ENCODE measurements at regions of chr7 and their contacts with region 1.

Region 1: GRCh38 chr7:44858161-44858560 is 10.3 kb upstream of the H2AZ2 start:
- DNase-seq: no peak
- H3K4me3 ChIP-seq: no peak overlapping the region
- H3K27ac ChIP-seq: no peak overlapping the region
- H3K4me1 ChIP-seq: peaks cover 0 to 6% (median 0%) of the 10 kb centered on the region in 3 donors
- H3K27me3 ChIP-seq: no peaks in the 10 kb centered on the region
- CTCF ChIP-seq: peak in 3 of 6 experiments; percentile 26 to 39 (median 35)
- POLR2A ChIP-seq: no peak

Region 2: DNA sequence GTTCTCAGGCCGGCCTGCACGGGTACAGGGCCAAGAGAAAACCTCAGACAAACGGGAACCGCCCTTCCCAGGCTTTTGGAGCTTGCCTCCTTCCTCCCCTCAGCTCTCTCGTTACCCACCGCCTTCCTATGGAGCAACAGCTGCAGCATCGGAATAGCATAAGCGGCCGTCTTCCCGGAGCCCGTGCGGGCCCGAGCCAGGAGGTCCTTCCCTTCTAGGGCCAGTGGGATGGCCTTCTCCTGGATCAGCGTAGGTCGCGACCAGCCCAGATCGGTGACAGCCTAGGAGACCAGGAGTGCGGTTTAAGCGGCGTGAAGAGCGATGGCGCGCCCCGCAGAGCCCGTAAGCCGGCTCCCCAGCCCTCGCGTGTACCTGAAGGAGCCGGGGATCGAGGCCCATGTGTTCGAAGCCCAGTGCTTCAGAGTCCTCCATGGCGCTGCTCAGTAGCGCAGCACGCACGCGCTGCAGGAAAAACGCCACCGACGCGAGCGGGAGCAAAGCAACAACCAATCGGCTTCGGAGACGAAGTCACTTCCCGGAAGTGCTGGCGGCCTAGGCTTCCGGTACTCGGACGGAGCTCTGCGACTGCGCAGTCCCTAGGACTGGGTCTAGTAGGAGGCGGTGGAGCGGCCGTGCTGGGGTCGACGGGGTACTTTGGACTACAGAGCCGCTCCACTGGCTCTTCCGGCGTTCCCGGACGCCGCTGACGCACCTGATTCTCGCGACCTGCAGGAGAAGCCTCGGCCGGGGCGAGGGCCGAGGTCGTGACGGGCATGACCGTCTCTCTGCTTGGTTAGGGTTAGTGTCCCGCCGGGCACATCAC is 284.5 kb before region 1 on chr7 and contains the start of gene DDX56:
- intact Hi-C with region 1: no loop called
- DNase-seq: peak; percentile 70
- H3K4me3 ChIP-seq: peak within 1 kb of the TSS; percentile 67 to 94 (median 74)
- H3K27ac ChIP-seq: peak within 1 kb of the TSS; percentile 82 to 92 (median 92)
- H3K4me1 ChIP-seq: peaks cover 11 to 33% (median 19%) of the 10 kb centered on the region in 3 donors
- H3K27me3 ChIP-seq: no peaks in the 10 kb centered on the region
- CTCF ChIP-seq: peak in 1 of 6 experiments; percentile 13
- POLR2A ChIP-seq: peak in 3 of 4 donors; percentile 47 to 87 (median 86)
- total RNA-seq, gene DDX56: 34.1 to 69.6 (median 50.0) TPM

Region 3: DNA sequence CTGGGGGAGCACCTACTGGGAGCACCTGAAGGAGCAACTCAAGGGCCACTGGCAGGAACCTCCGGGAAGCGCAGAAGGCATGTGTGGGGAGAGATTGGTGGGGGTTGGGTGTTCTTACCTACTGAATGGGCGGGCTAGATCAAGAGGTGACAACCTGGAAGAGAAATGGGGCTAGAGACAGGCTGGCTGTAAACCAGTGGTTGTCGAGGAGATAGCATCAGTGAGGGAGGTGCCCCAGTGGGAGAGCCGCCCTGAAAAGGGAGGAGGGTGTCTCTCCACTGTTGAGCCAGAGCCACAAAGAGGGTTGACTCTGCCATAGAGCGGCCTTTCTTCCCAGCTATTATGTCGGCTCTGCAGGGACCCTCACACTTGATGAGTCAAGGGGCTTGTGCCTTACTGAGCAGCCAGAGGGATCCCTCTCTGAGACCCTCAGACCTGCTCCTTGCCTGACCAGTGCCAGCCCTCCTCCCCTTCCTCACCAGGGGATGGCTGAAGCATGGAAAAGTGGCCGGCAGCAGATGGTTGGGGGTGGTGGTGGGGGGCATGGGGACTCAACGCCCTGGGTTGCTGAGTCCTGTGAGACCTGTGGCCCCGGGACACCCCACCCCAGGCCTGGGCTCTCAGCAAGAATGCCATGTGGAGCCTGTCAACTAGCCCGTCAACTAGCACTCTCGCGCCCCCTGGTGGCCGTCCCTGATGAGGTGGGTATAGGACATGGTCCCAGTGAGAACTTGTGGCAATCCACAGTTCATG is 63.6 kb after region 1 on chr7:
- intact Hi-C with region 1: loop called (anchors 5 kb)
- DNase-seq: peak; percentile 58
- H3K4me3 ChIP-seq: no peak overlapping the region
- H3K27ac ChIP-seq: no peak overlapping the region
- H3K4me1 ChIP-seq: peaks cover 0 to 7% (median 3%) of the 10 kb centered on the region in 3 donors
- H3K27me3 ChIP-seq: no peaks in the 10 kb centered on the region
- CTCF ChIP-seq: peak; percentile 77 to 91 (median 81)
- POLR2A ChIP-seq: no peak

Region 4: GRCh38 chr7:45013465-45013967 is 155.4 kb after region 1 on chr7:
- intact Hi-C with region 1: no loop called
- DNase-seq: no peak
- H3K4me3 ChIP-seq: no peak overlapping the region
- H3K27ac ChIP-seq: no peak overlapping the region
- H3K4me1 ChIP-seq: peaks cover 0 to 9% (median 9%) of the 10 kb centered on the region in 3 donors
- H3K27me3 ChIP-seq: no peaks in the 10 kb centered on the region
- CTCF ChIP-seq: no peak
- POLR2A ChIP-seq: no peak

Region 5: DNA sequence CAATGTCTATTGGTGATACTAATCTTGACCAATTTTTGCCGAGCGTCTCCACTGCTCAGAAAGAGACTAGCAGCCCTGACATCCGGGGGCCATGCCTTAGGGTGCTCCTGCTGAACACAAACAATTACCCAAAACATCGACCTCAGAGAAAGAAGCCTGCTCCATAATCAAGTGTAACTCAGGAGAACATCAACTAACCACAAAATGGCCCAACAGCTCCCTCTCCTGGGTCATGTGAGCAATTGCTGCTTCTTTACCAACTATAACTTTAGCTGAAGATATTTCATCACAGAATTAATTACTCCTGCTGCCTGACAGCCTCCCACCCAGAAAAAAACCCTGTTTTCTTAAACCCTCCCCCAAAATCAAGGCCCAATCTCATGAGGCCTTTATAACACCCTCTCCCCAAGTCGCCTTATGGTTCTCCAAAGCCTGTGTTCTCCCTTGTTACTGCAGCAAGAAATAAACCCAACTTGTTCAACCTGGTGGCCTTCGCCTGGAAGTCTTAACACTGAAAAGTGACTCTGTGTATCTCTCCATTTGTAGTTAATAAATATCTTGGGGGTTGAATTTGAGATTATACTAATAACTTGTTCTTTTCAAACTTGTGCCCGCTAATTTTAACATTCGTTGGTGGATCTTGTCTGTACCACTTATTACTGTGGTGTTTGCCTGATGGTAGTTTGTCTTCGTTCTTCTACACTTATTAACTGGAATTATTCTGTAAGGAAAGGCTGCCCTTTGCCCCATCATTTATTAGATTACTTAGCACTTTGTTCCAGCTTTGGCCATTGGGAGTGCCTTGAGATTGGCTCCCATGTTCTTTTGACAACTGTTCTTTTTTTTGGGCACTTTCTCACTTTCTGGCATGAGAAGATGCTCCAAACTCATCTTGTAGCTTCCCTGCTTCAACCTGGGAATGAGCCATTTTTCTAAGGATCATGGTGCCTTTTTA is 278.2 kb after region 1 on chr7:
- intact Hi-C with region 1: loop called (anchors 10 kb)
- DNase-seq: no peak
- H3K4me3 ChIP-seq: no peak overlapping the region
- H3K27ac ChIP-seq: no peak overlapping the region
- H3K4me1 ChIP-seq: no peaks in the 10 kb centered on the region
- H3K27me3 ChIP-seq: peaks cover 0 to 8% (median 0%) of the 10 kb centered on the region in 4 donors
- CTCF ChIP-seq: peak; percentile 80 to 91 (median 84)
- POLR2A ChIP-seq: no peak